PC-9 (cell line): ENCODE measurements at regions of chr1 and their contacts with region 1.

Region 1: DNA sequence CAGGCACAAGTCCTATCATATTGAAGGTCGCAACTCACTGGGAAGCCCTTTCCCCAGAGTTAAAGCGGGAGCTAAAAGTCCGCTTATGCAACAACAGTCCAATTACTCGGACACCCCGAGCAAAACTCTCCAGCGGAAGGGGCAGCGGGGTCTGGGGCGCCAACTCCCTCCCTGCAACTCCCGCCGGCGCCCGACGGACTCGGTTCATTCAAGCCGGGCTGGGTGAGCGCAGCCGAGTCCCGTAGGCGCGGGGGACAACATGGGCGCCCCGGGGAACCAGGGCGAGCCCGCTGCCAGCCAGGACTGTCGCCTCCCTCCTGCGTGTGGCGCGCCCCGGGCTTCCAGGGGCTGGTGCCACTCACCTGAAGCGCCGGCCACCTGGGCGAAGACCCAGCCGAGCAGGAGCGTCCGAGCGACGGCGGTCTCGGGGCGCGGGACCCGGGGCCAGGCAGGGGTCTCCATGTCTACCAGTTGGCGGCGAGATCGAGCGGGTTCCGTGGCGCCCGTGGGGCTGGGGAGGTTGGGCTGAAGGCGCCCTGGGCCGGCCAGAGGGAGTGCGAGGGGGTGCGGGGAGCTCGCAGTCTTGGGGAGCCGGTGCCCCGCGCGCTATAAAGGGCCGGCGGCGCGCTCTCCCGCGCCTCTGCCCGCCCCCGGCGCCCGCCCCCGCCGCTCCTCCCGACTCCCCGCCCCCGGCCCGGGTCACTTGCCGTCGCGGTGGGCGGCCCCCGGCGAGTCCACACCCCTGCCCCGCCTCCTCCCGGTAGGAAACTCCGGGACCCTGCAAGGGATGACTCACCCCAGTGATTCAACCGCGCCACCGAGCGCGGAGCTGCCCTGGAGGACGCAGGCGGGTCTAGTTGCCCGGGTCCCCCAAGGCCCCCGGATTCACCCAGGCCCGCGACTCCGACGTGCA is at the start of gene F3:
- DNase-seq: peak; percentile 93 to 98
- H3K4me3 ChIP-seq: peak within 1 kb of the TSS; percentile 80
- H3K27ac ChIP-seq: peak within 1 kb of the TSS; percentile 87
- H3K4me1 ChIP-seq: peaks cover 67% of the 10 kb centered on the region
- H3K27me3 ChIP-seq: no peaks in the 10 kb centered on the region
- CTCF ChIP-seq: no peak; the same call in 1 of the 2 replicates
- total RNA-seq, gene F3: 335 and 434 TPM in 2 replicates

Region 2: DNA sequence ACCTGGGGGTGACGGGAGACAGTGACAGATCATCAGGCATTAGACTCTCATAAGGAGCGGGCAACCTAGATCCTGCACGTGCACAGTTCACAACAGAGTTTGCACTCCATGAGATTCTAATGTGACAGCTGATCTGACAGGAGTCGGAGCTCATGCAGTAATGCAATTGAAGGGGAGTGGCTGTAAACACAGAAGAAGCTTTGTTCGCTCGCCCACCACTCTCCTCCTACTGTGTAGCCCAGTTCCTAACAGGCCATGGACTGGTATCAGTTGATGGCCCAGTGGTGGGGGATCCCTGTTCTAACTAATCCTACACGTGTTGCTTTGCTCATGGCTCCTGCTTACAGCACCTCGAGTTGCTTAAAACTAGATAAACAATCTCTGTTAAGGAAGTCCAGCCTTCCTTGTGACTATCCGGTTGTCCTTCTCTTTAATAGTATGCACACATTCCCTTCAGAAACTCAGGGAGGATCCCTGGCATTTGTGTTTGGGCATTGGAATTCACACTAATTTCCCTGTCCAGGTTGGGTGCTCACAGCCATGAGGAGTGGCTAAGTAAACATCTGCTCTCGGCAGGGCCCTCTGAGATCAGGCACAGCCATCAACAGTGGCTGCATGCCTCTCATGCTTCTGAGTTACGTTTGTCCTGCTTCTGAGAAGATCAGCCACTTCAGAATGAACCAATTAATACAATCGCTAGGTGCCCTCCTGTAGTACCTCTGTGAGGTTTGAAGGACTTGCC is 21.3 kb after region 1 on chr1:
- CTCF ChIA-PET with region 1: no interaction called
- POLR2A ChIA-PET with region 1: interaction called, 3 read pairs
- intact Hi-C with region 1: loop called (anchors 2 kb)
- DNase-seq: peak; percentile 75 to 94
- H3K4me3 ChIP-seq: no peak overlapping the region; the same call in 1 of the 2 replicates
- H3K27ac ChIP-seq: peak overlapping the region; percentile 65
- H3K4me1 ChIP-seq: peaks cover 39% of the 10 kb centered on the region
- H3K27me3 ChIP-seq: no peaks in the 10 kb centered on the region
- CTCF ChIP-seq: no peak

Region 3: DNA sequence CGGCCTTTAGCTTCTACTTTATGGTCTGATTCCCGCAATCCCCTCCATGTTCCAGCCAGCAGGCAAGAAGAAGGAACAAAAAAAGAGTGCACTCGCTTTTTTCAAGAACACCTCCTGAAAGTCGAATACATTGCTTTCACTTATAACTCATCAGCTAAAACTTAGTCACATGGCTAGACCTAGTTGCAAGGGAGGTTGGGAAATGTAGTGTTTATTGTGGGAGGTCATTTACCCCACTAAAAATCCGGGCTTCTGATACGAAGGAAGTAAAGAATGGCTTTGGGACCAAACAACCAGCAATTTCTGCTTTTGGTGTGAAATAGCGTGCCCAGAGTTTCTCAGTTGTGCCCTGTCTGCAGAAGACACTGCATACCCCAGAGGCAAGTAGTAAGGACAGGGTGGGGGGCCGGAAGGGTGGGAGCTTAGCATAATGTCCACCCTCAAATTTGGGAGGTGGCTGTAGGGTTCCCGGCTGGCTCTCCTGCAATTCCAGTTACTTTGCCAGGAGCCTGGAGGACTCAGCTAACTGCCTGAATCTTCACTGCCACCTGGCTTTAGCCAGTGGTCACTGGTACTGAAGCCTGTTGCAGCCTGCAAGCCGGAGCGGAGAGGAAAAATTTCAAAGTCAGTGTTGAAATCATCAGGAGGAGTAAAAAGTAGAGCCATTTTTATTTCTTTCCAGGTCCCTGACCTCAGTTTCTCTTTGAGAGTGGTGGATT is 57.8 kb after region 1 on chr1:
- CTCF ChIA-PET with region 1: interaction called, 3 read pairs
- POLR2A ChIA-PET with region 1: interaction called, 5 read pairs
- intact Hi-C with region 1: loop called (anchors 1 kb)
- DNase-seq: peak; percentile 43 to 51
- H3K4me3 ChIP-seq: no peak overlapping the region
- H3K27ac ChIP-seq: no peak overlapping the region
- H3K4me1 ChIP-seq: peaks cover 47% of the 10 kb centered on the region
- H3K27me3 ChIP-seq: no peaks in the 10 kb centered on the region
- CTCF ChIP-seq: peak; percentile 71

Region 4: DNA sequence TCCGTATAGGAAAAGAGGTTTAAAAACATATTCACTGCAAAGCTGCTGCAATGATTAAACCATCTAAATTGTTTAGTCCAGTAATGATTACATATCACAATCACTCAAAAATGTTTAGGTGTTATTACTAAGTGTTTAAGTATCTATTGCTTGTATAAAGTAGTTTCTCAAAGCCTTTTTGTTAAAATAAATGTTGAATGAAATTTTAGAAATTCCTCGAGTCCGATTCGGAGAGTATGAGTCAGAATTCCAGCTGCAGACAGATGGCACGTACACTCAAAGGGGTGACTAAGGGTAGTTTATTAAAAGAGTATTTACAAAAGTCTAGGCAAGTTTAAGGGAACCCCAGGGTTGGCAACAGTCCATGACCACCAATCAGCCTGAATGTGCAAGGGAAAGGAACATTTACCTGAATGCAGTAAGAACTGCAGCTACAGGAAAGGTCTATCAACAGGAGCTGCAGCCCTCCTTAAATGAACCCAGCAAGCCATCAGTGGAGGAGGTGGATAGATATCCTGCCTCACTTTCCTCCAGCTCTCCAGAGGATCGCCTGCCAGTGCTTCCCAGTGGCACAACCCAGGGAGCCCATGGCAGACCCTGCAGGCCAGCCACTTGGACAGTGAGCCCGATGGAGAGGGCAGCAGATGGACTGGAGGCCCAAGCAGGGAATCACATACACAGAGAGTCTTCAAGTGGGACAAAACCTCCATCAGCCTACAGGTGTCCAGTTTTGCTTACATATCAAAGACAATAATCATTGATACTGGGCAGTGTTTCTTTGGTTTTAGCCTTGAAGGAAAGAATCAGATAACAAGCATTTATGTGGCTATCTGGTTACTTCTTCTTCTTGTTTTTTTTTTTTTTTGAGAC is 186.7 kb after region 1 on chr1:
- CTCF ChIA-PET with region 1: no interaction called
- POLR2A ChIA-PET with region 1: interaction called, 4 read pairs
- intact Hi-C with region 1: loop called (anchors 5 kb)
- DNase-seq: peak; percentile 83 to 100
- H3K4me3 ChIP-seq: peak overlapping the region; percentile 1; the same call in 1 of the 2 replicates
- H3K27ac ChIP-seq: peak overlapping the region; percentile 85
- H3K4me1 ChIP-seq: peaks cover 44% of the 10 kb centered on the region
- H3K27me3 ChIP-seq: no peaks in the 10 kb centered on the region
- CTCF ChIP-seq: no peak